CD8-positive, alpha-beta T cell (primary cell): ENCODE measurements at regions of chr10 and their contacts with region 1.

Region 1: DNA sequence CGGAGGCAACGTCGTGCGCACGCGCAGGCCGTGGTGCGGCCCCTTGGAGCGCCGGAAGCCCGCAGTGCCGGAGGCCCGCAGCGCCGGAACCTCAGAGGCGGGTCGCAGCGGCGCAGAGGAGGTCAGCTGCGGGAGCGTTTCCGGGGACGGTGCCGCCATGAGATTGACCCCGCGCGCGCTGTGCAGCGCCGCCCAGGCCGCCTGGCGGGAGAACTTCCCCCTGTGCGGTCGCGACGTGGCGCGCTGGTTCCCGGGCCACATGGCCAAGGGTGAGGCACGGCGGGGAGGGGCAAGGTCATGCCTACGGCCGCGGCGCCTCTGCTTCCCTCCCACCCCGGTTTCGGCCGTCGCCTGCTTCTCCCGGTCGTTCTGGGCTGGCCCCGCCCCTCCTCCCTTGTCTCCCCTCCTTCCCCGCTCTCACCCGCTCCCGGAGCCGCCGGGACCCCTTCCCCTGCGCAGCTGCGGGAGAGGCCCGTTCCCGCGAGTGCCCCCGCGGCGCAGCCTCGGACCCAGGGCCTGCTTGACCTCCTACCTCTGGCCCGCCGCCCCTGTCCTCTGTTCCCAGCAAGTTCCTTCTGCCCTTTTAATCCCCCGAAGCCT is at the start of gene MTG1:
- DNase-seq: peak; percentile 80 to 96 (median 93)
- ATAC-seq: peak; percentile 68
- H3K4me3 ChIP-seq: peak within 1 kb of the TSS; percentile 69 to 92
- H3K4me3 Mint-ChIP-seq: peak within 1 kb of the TSS; percentile 86
- H3K27ac ChIP-seq: peak within 1 kb of the TSS; percentile 71 to 76
- H3K27ac Mint-ChIP-seq: peak within 1 kb of the TSS; percentile 89
- H3K4me1 ChIP-seq: peaks cover 40% of the 10 kb centered on the region
- H3K4me1 Mint-ChIP-seq: peaks cover 50% of the 10 kb centered on the region
- H3K27me3 ChIP-seq: no peaks in the 10 kb centered on the region
- H3K27me3 Mint-ChIP-seq: no peaks in the 10 kb centered on the region
- CTCF ChIP-seq: no peak
- total RNA-seq, gene MTG1: 30.2 to 31.0 TPM

Region 2: DNA sequence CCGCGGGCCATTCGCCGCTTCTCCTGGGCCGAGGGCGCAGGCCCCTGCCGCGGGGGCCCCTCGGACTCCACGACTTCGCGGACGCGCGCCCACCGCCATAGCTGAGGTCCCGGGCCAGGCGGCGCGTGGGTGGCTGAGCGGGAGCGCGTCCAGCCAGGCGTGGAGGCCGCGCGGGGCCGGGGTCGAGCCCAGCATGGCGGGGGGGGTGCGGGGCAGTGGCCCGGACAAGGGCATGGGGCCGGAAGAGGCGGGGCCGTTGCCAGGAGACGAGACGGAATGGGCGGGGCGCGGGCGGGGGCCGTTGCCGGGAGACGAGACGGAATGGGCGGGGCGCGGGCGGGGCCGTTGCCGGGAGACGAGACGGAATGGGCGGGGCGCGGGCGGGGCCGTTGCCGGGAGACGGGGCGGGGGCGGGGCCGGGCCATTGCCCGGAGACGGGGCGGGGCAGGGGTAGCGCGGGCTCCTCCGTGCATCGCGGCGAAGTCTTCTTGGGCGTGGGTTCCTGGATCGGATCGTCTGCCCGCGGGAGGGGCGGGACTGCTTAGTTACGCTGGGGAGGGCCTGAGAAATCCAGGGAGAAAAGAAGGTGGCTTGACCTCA is 132.3 kb before region 1 on chr10:
- CTCF ChIA-PET with region 1: no interaction called
- POLR2A ChIA-PET with region 1: no interaction called
- intact Hi-C with region 1: loop called (anchors 5 kb)
- DNase-seq: peak; percentile 73 to 89 (median 82)
- ATAC-seq: peak; percentile 29
- H3K4me3 ChIP-seq: peak overlapping the region; percentile 61 to 68
- H3K4me3 Mint-ChIP-seq: peak overlapping the region; percentile 82
- H3K27ac ChIP-seq: peak overlapping the region; percentile 63 to 74
- H3K27ac Mint-ChIP-seq: peak overlapping the region; percentile 77
- H3K4me1 ChIP-seq: peaks cover 71% of the 10 kb centered on the region
- H3K4me1 Mint-ChIP-seq: peaks cover 66% of the 10 kb centered on the region
- H3K27me3 ChIP-seq: no peaks in the 10 kb centered on the region
- H3K27me3 Mint-ChIP-seq: no peaks in the 10 kb centered on the region
- CTCF ChIP-seq: no peak

Region 3: DNA sequence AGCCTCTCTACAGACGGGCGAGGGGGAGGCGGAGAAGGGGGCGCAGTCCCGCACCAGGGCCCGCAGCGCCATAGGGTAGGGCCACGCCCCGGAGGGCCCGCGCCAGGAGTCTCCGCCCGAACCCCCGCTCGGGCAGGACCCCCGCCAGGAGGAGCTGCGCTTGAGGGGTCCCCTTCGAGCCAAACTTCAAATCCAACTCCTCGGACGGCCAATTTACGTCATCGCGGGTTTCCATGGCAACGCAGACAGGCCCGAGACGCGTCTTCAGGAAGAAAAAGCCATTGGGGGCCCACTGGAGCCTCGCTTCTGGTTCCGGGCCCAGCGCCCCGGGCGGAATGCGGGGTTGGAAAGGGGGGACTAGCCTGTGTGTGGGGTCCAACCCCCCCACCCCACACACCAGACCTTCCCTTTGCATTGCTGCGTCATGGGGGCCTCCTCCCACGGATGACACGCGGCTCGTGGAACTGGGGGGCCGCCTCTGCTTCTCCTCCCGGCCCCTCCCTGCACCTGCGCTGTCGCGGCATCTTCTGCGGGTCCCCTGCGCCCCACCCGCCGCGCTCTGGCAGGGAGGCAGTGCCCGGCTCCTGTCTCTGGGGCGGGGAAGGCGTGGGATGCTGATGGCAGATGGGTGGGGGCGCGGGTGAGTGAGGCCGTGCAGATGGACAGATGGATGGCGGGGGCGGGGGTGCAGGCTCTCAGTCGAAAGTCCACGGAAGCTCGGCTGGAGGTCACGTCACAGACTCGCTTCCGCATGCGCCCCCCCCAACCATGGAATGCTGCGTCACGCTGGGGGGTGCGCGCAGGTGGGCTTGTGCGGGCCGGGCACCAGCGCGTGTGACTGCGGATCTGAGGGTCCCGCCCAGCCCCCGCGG is 58.7 kb before region 1 on chr10:
- CTCF ChIA-PET with region 1: no interaction called
- POLR2A ChIA-PET with region 1: interaction called, 5 read pairs
- intact Hi-C with region 1: loop called (anchors 1 to 2 kb)
- DNase-seq: peak; percentile 72 to 96 (median 87)
- ATAC-seq: peak; percentile 63
- H3K4me3 ChIP-seq: peak overlapping the region; percentile 62 to 79
- H3K4me3 Mint-ChIP-seq: peak overlapping the region; percentile 81
- H3K27ac ChIP-seq: peak overlapping the region; percentile 64 to 71
- H3K27ac Mint-ChIP-seq: peak overlapping the region; percentile 89
- H3K4me1 ChIP-seq: peaks cover 22% of the 10 kb centered on the region
- H3K4me1 Mint-ChIP-seq: peaks cover 2% of the 10 kb centered on the region
- H3K27me3 ChIP-seq: peaks cover 0 to 30% of the 10 kb centered on the region in 2 experiments
- H3K27me3 Mint-ChIP-seq: no peaks in the 10 kb centered on the region
- CTCF ChIP-seq: no peak

Region 4: GRCh38 chr10:133373104-133373624 is 21.0 kb before region 1 on chr10 and contains the start of gene ECHS1:
- CTCF ChIA-PET with region 1: interaction called, 4 read pairs
- POLR2A ChIA-PET with region 1: interaction called, 38 read pairs
- intact Hi-C with region 1: loop called (anchors 1 kb)
- DNase-seq: peak; percentile 81 to 95 (median 92)
- ATAC-seq: peak; percentile 99
- H3K4me3 ChIP-seq: peak within 1 kb of the TSS; percentile 56 to 73
- H3K4me3 Mint-ChIP-seq: peak within 1 kb of the TSS; percentile 78
- H3K27ac ChIP-seq: peak within 1 kb of the TSS in 1 of 2 experiments; percentile 48
- H3K27ac Mint-ChIP-seq: peak within 1 kb of the TSS; percentile 32
- H3K4me1 ChIP-seq: peaks cover 10% of the 10 kb centered on the region
- H3K4me1 Mint-ChIP-seq: peaks cover 6% of the 10 kb centered on the region
- H3K27me3 ChIP-seq: no peaks in the 10 kb centered on the region
- H3K27me3 Mint-ChIP-seq: no peaks in the 10 kb centered on the region
- CTCF ChIP-seq: no peak
- total RNA-seq, gene ECHS1: 7.9 to 8.5 TPM

Region 5: GRCh38 chr10:133520155-133520738 is 126.1 kb after region 1 on chr10:
- CTCF ChIA-PET with region 1: no interaction called
- POLR2A ChIA-PET with region 1: no interaction called
- intact Hi-C with region 1: loop called in 1 of 2 experiments (anchors 2 kb)
- DNase-seq: peak; percentile 78 to 97 (median 89)
- ATAC-seq: peak; percentile 99
- H3K4me3 ChIP-seq: peak overlapping the region; percentile 47 to 61
- H3K4me3 Mint-ChIP-seq: peak overlapping the region; percentile 63
- H3K27ac ChIP-seq: no peak overlapping the region
- H3K27ac Mint-ChIP-seq: peak overlapping the region; percentile 45
- H3K4me1 ChIP-seq: peaks cover 6% of the 10 kb centered on the region
- H3K4me1 Mint-ChIP-seq: peaks cover 13% of the 10 kb centered on the region
- H3K27me3 ChIP-seq: no peaks in the 10 kb centered on the region
- H3K27me3 Mint-ChIP-seq: peaks cover 3% of the 10 kb centered on the region
- CTCF ChIP-seq: peak; percentile 88